Astrocyte of the cerebellum (primary cell): ENCODE measurements at regions of chr12 and their contacts with region 1.

Region 1: GRCh38 chr12:117538032-117538690 is 176.7 kb upstream of the NOS1 start:
- DNase-seq: no peak
- H3K4me3 ChIP-seq: no peak overlapping the region
- CTCF ChIP-seq: no peak

Region 2: DNA sequence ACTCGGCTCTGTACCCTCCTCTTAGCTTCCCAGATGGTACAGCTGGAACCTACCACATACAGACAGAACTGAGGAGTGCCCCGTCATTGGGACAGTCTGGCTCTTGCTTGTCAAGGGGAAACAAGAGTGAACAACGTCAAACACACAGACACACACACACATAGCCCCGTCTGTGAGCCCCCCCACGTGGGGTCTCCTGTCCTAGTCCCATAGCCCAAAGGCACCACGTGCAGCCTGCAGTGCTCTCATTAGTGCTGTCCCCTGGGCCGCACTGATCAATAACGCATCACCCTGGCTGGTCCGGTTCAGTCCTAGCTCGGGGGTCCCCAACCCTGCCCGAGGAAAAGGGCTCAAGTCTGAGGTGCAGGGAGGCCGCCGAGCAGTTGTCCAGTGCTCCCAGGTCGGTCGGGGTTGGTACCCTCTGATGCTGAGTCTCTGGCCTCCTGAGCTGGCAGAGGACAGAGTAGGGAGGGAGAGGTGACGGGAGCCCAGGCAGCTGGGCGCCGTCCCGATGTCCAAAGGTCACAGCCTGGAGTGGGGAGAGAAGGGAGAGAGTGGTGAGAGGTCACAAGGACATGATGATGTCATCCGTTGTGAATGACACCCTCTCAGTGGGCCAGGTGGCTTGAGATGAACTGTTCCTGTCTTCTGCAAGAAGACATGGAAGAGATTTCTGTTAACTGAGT is 71.3 kb before region 1 on chr12:
- in situ Hi-C with region 1: loop called (anchors 5 kb)
- DNase-seq: no peak
- H3K4me3 ChIP-seq: no peak overlapping the region
- CTCF ChIP-seq: no peak

Region 3: GRCh38 chr12:117986705-117987469 is 448.7 kb after region 1 on chr12:
- in situ Hi-C with region 1: no loop called
- DNase-seq: peak; percentile 24
- H3K4me3 ChIP-seq: no peak overlapping the region
- CTCF ChIP-seq: no peak